MCF 10A (cell line): ENCODE measurements at regions of chr9 and their contacts with region 1.

Region 1: DNA sequence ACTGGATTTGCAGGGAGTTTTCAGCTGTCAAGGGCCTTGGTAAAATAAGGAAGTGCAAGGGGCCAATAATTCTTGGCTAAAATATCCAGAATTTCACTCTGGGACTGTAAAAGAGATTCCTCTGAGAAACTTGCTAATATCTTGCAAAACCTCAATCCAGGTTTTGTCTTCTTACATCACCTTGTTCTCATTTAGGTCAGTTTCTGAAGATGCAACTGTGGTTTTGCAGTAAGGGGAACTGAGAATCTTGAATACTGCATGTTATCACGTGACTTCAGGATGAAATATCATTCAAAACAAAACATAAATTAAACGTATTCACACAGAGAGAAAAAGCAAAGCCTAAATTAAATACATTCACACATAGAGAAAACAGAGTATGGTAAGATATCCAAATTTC is 35.0 kb upstream of the RIC1 start:
- DNase-seq: no peak
- H3K4me3 Mint-ChIP-seq: no peak overlapping the region
- H3K27ac Mint-ChIP-seq: no peak overlapping the region
- H3K4me1 Mint-ChIP-seq: no peaks in the 10 kb centered on the region
- H3K27me3 Mint-ChIP-seq: no peaks in the 10 kb centered on the region
- CTCF ChIP-seq: no peak

Region 2: GRCh38 chr9:5582835-5583195 is 11.1 kb before region 1 on chr9:
- CTCF ChIA-PET with region 1: interaction called, 48 read pairs
- POLR2A ChIA-PET with region 1: no interaction called
- intact Hi-C with region 1: no loop called
- DNase-seq: no peak
- H3K4me3 Mint-ChIP-seq: no peak overlapping the region
- H3K27ac Mint-ChIP-seq: no peak overlapping the region
- H3K4me1 Mint-ChIP-seq: no peaks in the 10 kb centered on the region
- H3K27me3 Mint-ChIP-seq: no peaks in the 10 kb centered on the region
- CTCF ChIP-seq: no peak

Region 3: GRCh38 chr9:5698004-5698403 is 104.1 kb after region 1 on chr9:
- CTCF ChIA-PET with region 1: no interaction called
- POLR2A ChIA-PET with region 1: no interaction called
- intact Hi-C with region 1: no loop called
- DNase-seq: no peak
- H3K4me3 Mint-ChIP-seq: no peak overlapping the region
- H3K27ac Mint-ChIP-seq: no peak overlapping the region
- H3K4me1 Mint-ChIP-seq: peaks cover 16% of the 10 kb centered on the region
- H3K27me3 Mint-ChIP-seq: no peaks in the 10 kb centered on the region
- CTCF ChIP-seq: no peak